HepG2 (cell line): ENCODE measurements at regions of chr9 and their contacts with region 1.

Region 1: GRCh38 chr9:85508616-85509015 is 233.1 kb downstream of the AGTPBP1 start:
- DNase-seq: peak; percentile 9
- ATAC-seq: peak; percentile 57; the same call in 2 of the 3 replicates
- H3K4me3 ChIP-seq: no peak overlapping the region
- H3K27ac ChIP-seq: no peak overlapping the region
- H3K4me1 ChIP-seq: no peaks in the 10 kb centered on the region
- H3K27me3 ChIP-seq: peaks cover 2 to 17% of the 10 kb centered on the region in 2 experiments; a peak in 2 of 5 replicates
- CTCF ChIP-seq: peak; percentile 30; the same call in 1 of the 2 replicates
- EP300 ChIP-seq: no peak
- POLR2A ChIP-seq: no peak
- RAD21 ChIP-seq: no peak

Region 2: GRCh38 chr9:85108229-85108628 is 400.4 kb before region 1 on chr9:
- CTCF ChIA-PET with region 1: no interaction called
- POLR2A ChIA-PET with region 1: no interaction called
- in situ Hi-C with region 1: no loop called
- intact Hi-C with region 1: no loop called
- DNase-seq: no peak
- ATAC-seq: no peak
- H3K4me3 ChIP-seq: no peak overlapping the region
- H3K27ac ChIP-seq: no peak overlapping the region
- H3K4me1 ChIP-seq: no peaks in the 10 kb centered on the region
- H3K27me3 ChIP-seq: no peaks in the 10 kb centered on the region; a peak in 1 of 5 replicates
- CTCF ChIP-seq: no peak
- EP300 ChIP-seq: no peak
- POLR2A ChIP-seq: no peak
- RAD21 ChIP-seq: no peak

Region 3: GRCh38 chr9:85321561-85321960 is 187.1 kb before region 1 on chr9:
- CTCF ChIA-PET with region 1: no interaction called
- POLR2A ChIA-PET with region 1: no interaction called
- in situ Hi-C with region 1: no loop called
- intact Hi-C with region 1: no loop called
- DNase-seq: no peak
- ATAC-seq: no peak
- H3K4me3 ChIP-seq: no peak overlapping the region
- H3K27ac ChIP-seq: no peak overlapping the region
- H3K4me1 ChIP-seq: no peaks in the 10 kb centered on the region
- H3K27me3 ChIP-seq: no peaks in the 10 kb centered on the region
- CTCF ChIP-seq: no peak
- EP300 ChIP-seq: no peak
- POLR2A ChIP-seq: no peak
- RAD21 ChIP-seq: no peak

Region 4: DNA sequence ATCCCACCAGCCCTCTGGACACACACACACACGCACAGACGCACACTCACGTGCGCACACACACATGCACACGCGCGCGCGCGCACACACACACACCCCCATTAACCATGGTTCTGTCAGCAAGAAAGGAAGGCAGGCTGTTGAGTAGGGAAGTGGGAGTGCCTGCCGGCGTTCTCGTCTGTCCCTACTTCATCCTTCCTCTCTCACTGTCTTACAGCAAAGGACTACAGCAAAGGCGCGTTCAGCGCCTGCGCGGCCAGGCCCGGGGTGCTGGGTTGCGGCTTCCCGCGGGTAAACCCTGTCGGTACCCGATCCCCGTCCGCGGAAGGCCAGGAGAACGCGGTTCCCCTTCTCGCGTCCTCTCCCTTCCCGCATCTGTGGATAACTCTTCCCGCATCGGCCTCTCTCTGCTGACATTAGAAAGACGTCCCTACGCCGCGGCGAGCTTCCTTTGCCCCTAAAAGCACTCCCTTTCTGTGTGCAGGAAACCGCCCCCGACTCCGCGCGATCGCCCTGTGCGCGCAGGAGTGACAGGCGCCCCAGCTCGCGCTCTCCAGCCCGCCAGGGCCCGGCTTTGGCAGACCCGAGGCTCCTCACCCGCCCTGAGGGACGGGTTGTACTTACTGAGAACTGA is 14.0 kb after region 1 on chr9:
- CTCF ChIA-PET with region 1: no interaction called
- POLR2A ChIA-PET with region 1: no interaction called
- in situ Hi-C with region 1: no loop called
- intact Hi-C with region 1: no loop called
- DNase-seq: no peak
- ATAC-seq: no peak
- H3K4me3 ChIP-seq: no peak overlapping the region
- H3K27ac ChIP-seq: no peak overlapping the region
- H3K4me1 ChIP-seq: no peaks in the 10 kb centered on the region
- H3K27me3 ChIP-seq: peaks cover 0 to 37% of the 10 kb centered on the region in 2 experiments; a peak in 4 of 5 replicates
- CTCF ChIP-seq: no peak
- EP300 ChIP-seq: no peak
- POLR2A ChIP-seq: no peak
- RAD21 ChIP-seq: no peak

Region 5: GRCh38 chr9:85610074-85610860 is 101.7 kb after region 1 on chr9:
- CTCF ChIA-PET with region 1: no interaction called
- POLR2A ChIA-PET with region 1: no interaction called
- in situ Hi-C with region 1: no loop called
- intact Hi-C with region 1: loop called (anchors 2 kb)
- DNase-seq: peak; percentile 60
- ATAC-seq: peak; percentile 87
- H3K4me3 ChIP-seq: no peak overlapping the region
- H3K27ac ChIP-seq: no peak overlapping the region
- H3K4me1 ChIP-seq: no peaks in the 10 kb centered on the region
- H3K27me3 ChIP-seq: no peaks in the 10 kb centered on the region
- CTCF ChIP-seq: peak; percentile 84
- EP300 ChIP-seq: no peak
- POLR2A ChIP-seq: no peak
- RAD21 ChIP-seq: 0 out of 2 replicates have a peak, but pooled peaks have one; percentile 51